ENCODE measurements at regions of chr12 and their contacts with region 1.

Region 1: GRCh38 chr12:53402871-53403270 is 20.8 kb upstream of the AMHR2 start:
- DNase-seq: no peak
- H3K4me3 ChIP-seq: no peak overlapping the region
- H3K27ac ChIP-seq: no peak overlapping the region
- H3K4me1 ChIP-seq: no peaks in the 10 kb centered on the region
- H3K27me3 ChIP-seq: no peaks in the 10 kb centered on the region
- CTCF ChIP-seq: no peak
- EP300 ChIP-seq: no peak
- POLR2A ChIP-seq: no peak
- RAD21 ChIP-seq: no peak

Region 2: GRCh38 chr12:53414756-53415417 is 12.0 kb after region 1 on chr12:
- CTCF ChIA-PET with region 1: interaction called, 30 read pairs
- POLR2A ChIA-PET with region 1: interaction called, 5 read pairs
- DNase-seq: no peak
- H3K4me3 ChIP-seq: no peak overlapping the region
- H3K27ac ChIP-seq: no peak overlapping the region
- H3K4me1 ChIP-seq: no peaks in the 10 kb centered on the region; a peak in 1 of 7 replicates
- H3K27me3 ChIP-seq: no peaks in the 10 kb centered on the region
- CTCF ChIP-seq: no peak
- EP300 ChIP-seq: no peak
- POLR2A ChIP-seq: no peak
- RAD21 ChIP-seq: no peak

Region 3: GRCh38 chr12:53508534-53509199 is 105.8 kb after region 1 on chr12:
- CTCF ChIA-PET with region 1: no interaction called
- POLR2A ChIA-PET with region 1: no interaction called
- DNase-seq: peak; percentile 77 to 97
- H3K4me3 ChIP-seq: no peak overlapping the region
- H3K27ac ChIP-seq: no peak overlapping the region
- H3K4me1 ChIP-seq: no peaks in the 10 kb centered on the region
- H3K27me3 ChIP-seq: no peaks in the 10 kb centered on the region
- CTCF ChIP-seq: peak; percentile 94 to 99 (median 98)
- EP300 ChIP-seq: no peak
- POLR2A ChIP-seq: no peak
- RAD21 ChIP-seq: peak; percentile 99

Region 4: GRCh38 chr12:53638057-53638456 is 235.2 kb after region 1 on chr12:
- CTCF ChIA-PET with region 1: no interaction called
- POLR2A ChIA-PET with region 1: no interaction called
- DNase-seq: no peak
- H3K4me3 ChIP-seq: no peak overlapping the region
- H3K27ac ChIP-seq: no peak overlapping the region
- H3K4me1 ChIP-seq: no peaks in the 10 kb centered on the region
- H3K27me3 ChIP-seq: no peaks in the 10 kb centered on the region
- CTCF ChIP-seq: no peak
- EP300 ChIP-seq: no peak
- POLR2A ChIP-seq: no peak
- RAD21 ChIP-seq: no peak

Region 5: GRCh38 chr12:53670299-53670698 is 267.4 kb after region 1 on chr12:
- CTCF ChIA-PET with region 1: no interaction called
- POLR2A ChIA-PET with region 1: no interaction called
- DNase-seq: no peak
- H3K4me3 ChIP-seq: no peak overlapping the region
- H3K27ac ChIP-seq: no peak overlapping the region
- H3K4me1 ChIP-seq: peaks cover 0 to 6% (median 3%) of the 10 kb centered on the region in 4 experiments; a peak in 5 of 7 replicates
- H3K27me3 ChIP-seq: no peaks in the 10 kb centered on the region
- CTCF ChIP-seq: no peak
- EP300 ChIP-seq: no peak
- POLR2A ChIP-seq: no peak
- RAD21 ChIP-seq: no peak